ENCODE measurements at regions of chr2 and their contacts with region 1.

Region 1: GRCh38 chr2:225660262-225661131 is 261.0 kb downstream of the NYAP2 start:
- DNase-seq: peak; percentile 65 to 83
- ATAC-seq: peak; percentile 59 to 83 (median 67)
- H3K4me3 ChIP-seq: no peak overlapping the region
- H3K27ac ChIP-seq: no peak overlapping the region
- H3K4me1 ChIP-seq: no peaks in the 10 kb centered on the region
- H3K27me3 ChIP-seq: no peaks in the 10 kb centered on the region
- CTCF ChIP-seq: peak; percentile 79

Region 2: DNA sequence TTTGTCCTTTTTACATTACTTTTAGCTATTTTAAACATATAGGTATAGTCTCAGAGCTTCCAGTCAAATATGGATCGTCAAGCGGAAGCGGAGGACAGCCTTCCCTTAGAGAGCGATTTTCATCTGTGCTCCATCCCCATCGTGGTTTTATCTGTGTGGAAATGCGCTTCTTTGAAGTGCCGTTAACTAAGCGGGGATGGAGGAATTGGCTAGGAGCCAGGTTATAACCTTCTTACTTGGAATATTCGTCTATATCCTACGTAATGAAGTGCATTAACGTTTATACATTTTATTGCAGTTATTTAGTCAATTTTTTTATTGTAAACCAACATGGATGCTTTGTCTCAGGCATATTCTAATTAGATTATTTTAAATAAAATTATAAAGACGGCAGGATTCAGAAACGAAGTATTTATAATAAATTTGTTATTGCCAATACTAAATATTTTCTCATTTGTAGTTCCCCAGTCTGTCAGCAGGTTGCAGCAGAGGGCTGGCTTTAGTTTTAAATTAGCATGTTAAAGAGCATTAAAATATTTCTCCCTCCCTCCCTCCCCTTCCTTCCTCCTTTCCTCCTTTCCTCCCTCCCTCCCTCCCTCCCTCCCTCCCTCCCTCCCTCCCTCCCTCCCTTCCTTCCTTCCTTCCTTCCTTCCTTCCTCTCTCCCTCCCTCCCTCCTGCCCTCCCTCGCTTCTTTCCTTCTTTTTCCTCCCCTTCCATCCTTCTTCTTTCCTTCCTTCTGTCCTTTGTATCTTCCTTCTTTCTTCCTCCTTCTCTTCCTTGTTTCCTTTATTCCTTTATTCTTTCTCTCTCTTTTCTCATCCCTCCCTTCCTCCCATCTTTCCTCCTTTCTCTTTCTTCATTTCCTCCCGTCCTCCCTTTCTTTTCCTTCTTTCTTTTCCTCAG is 537.7 kb before region 1 on chr2:
- intact Hi-C with region 1: loop called (anchors 2 to 5 kb)
- DNase-seq: no peak
- ATAC-seq: no peak
- H3K4me3 ChIP-seq: no peak overlapping the region
- H3K27ac ChIP-seq: no peak overlapping the region
- H3K4me1 ChIP-seq: no peaks in the 10 kb centered on the region
- H3K27me3 ChIP-seq: no peaks in the 10 kb centered on the region
- CTCF ChIP-seq: peak; percentile 39

Region 3: DNA sequence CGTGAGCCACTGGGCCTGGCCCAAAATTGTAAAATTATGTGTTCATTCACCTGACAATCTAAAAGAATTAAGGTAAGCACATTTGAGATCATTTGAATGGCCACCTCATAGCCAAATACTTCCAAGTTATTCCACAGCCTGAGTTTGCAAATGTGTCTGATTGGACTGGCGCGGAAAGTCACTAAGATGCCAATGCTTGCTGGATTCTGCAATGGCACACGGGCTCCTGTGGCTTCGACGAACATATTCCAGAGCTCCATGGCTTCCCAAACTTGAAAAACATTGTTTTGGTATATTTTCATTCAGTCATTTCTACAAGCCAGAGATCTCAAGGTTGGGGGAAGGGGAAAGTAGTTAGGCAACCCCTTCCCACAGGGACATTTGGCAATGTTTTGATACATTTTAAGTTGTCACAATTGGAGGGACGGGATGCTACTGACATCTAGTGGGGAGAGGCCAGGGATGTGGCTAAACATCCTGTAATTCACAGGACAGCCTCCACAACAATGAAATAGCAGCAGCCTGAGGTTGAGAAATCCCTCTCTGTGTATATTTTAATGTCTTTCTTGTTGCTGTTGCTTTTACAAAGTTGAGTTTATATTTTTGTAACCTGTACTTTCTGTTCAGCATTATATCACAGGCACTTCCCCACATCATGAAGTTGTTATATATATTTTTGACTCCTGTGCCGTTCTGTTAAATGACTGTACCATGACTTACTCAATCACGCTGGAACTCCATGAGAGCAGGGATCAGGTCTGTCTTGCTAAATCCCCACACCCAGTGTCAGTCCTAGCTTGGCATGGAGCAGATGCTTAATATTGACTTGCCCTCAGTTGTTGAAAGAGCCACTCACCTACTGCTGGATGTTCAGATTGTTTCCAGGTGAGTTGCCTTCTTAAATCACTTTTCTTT is 1446.6 kb after region 1 on chr2:
- intact Hi-C with region 1: loop called in 1 of 2 experiments (anchors 10 kb)
- DNase-seq: no peak
- ATAC-seq: peak in 3 of 4 donors; percentile 30 to 58 (median 35)
- H3K4me3 ChIP-seq: no peak overlapping the region
- H3K27ac ChIP-seq: no peak overlapping the region
- H3K4me1 ChIP-seq: no peaks in the 10 kb centered on the region
- H3K27me3 ChIP-seq: no peaks in the 10 kb centered on the region
- CTCF ChIP-seq: peak; percentile 27